SK-N-SH (cell line): ENCODE measurements at regions of chr12 and their contacts with region 1.

Region 1: GRCh38 chr12:119667577-119668323 is at the start of gene PRKAB1:
- DNase-seq: peak; percentile 98
- H3K4me3 ChIP-seq: peak within 1 kb of the TSS; percentile 84 to 99
- H3K27ac ChIP-seq: peak within 1 kb of the TSS; percentile 76 to 94
- H3K4me1 ChIP-seq: peaks cover 6 to 7% of the 10 kb centered on the region in 2 experiments; a peak in 3 of 4 replicates
- H3K27me3 ChIP-seq: no peaks in the 10 kb centered on the region
- CTCF ChIP-seq: peak; percentile 94
- EP300 ChIP-seq: no peak; a peak in 1 of 4 replicates
- RAD21 ChIP-seq: peak; percentile 55
- polyA plus RNA-seq, gene PRKAB1: 28.9 and 41.8 TPM in 2 replicates

Region 2: GRCh38 chr12:119681961-119682638 is 14.3 kb after region 1 on chr12:
- CTCF ChIA-PET with region 1: interaction called, 15 read pairs
- POLR2A ChIA-PET with region 1: interaction called, 3 read pairs
- DNase-seq: no peak
- H3K4me3 ChIP-seq: no peak overlapping the region
- H3K27ac ChIP-seq: no peak overlapping the region
- H3K4me1 ChIP-seq: no peaks in the 10 kb centered on the region; a peak in 1 of 4 replicates
- H3K27me3 ChIP-seq: no peaks in the 10 kb centered on the region
- CTCF ChIP-seq: no peak
- EP300 ChIP-seq: no peak
- RAD21 ChIP-seq: no peak